SK-N-SH (cell line): ENCODE measurements at regions of chr1 and their contacts with region 1.

Region 1: DNA sequence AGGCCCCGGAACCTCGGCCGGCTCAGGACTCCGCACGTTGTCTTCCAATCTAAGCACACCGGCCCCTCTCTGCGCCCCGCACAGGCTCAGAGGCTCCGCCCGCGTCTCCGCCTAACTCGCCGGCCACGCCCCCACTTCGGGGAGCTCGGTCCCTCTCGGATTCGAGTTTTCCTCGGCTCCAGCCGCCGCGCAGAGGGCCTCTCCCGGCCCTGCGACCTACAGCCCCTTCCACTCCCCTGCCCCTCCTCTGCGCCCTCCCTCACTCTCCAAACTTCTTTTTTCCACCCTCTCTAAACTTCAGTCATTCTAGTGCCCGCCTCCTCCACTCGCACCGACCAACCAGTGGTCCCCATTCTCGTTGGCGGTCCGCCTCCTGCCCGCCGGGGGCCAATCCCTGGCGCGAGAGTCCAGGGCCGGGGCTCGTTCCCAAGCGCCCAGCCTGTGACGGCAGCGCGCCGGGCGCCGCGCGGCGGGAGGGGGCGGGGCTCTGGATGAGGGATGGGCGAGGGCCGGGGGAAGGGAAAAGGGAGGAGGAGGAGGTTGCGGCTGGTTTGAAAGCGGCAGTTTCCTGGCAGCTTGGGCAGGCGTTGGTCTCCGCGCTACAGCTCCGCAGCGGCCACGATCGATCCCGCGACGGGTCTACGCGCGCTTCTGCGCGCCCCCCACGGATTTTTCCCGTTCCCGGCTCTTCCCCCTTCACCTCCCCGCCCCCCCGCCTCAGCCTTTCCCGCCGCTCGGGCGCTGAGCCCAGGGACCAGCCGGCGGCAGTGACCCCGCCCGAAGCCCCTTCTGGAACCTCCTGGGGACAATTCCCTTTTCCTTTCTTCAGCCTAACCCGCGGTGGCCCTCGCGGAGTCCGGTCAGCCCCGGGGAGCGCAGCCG is at the start of gene MAGI3:
- DNase-seq: peak; percentile 93
- H3K4me3 ChIP-seq: peak within 1 kb of the TSS; percentile 87 to 98
- H3K27ac ChIP-seq: peak within 1 kb of the TSS; percentile 57 to 100
- H3K4me1 ChIP-seq: peaks cover 0 to 7% of the 10 kb centered on the region in 2 experiments; a peak in 2 of 4 replicates
- H3K27me3 ChIP-seq: no peaks in the 10 kb centered on the region
- CTCF ChIP-seq: no peak
- EP300 ChIP-seq: 0 out of 4 replicates have a peak, but pooled peaks of 1 of the 2 experiments have one; percentile 8
- RAD21 ChIP-seq: peak; percentile 30; the same call in 1 of the 2 replicates
- polyA plus RNA-seq, gene MAGI3: 2.9 and 3.8 TPM in 2 replicates

Region 2: GRCh38 chr1:113140588-113141446 is 249.4 kb before region 1 on chr1:
- CTCF ChIA-PET with region 1: interaction called, 28 read pairs
- POLR2A ChIA-PET with region 1: interaction called, 61 read pairs
- DNase-seq: peak; percentile 66
- H3K4me3 ChIP-seq: no peak overlapping the region; a peak in 1 of 4 replicates
- H3K27ac ChIP-seq: peak overlapping the region in 1 of 2 experiments; percentile 85; a peak in 2 of 4 replicates
- H3K4me1 ChIP-seq: peaks cover 21 to 36% of the 10 kb centered on the region in 2 experiments; a peak in 3 of 4 replicates
- H3K27me3 ChIP-seq: no peaks in the 10 kb centered on the region
- CTCF ChIP-seq: peak; percentile 93
- EP300 ChIP-seq: peak in 1 of 2 experiments; percentile 3; a peak in 1 of 4 replicates
- RAD21 ChIP-seq: peak; percentile 98

Region 3: DNA sequence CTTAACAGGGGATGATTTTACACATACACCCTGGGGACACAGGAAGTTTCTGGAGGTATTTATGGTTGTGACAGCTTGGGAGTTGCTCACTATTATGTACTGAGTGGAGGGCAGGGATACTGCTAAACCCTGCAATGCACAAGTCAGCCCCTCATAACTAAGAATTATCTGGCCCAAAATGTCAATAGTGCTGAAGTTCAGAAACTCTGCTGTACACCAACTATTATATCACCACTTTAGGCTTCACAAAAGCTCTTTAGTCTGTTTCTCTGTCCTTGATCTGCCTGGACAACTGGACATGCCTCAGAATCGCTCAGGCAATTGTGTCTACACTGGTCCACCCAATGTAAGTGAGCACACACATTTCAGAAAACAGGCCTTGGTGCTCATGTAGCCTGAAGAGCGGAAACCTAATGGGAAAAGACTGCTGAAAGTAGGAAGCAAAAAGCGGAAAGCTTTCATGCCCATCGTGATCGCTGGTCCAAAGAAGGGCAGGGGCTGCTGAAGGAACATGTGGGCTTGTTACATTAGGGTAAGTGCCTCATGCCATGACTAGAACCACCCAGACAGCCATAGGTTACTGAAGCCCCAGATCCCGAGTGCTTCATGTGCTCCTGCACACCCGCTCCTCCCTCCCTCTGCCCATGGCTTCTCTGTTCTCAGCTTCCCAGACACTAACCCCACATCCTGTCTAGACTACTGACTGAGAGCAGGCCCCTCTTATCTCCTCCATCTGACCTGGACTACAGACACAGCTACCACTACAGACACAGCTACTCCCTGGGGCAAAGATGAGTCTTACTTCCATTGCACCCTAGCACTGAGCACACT is 243.7 kb before region 1 on chr1:
- CTCF ChIA-PET with region 1: interaction called, 28 read pairs
- POLR2A ChIA-PET with region 1: interaction called, 61 read pairs
- DNase-seq: peak; percentile 78
- H3K4me3 ChIP-seq: no peak overlapping the region
- H3K27ac ChIP-seq: peak overlapping the region; percentile 36 to 100
- H3K4me1 ChIP-seq: peaks cover 20 to 51% of the 10 kb centered on the region in 2 experiments
- H3K27me3 ChIP-seq: no peaks in the 10 kb centered on the region
- CTCF ChIP-seq: no peak
- EP300 ChIP-seq: peak; percentile 58 to 96; a peak in 3 of 4 replicates
- RAD21 ChIP-seq: peak; percentile 47

Region 4: GRCh38 chr1:113219377-113219776 is 170.8 kb before region 1 on chr1:
- CTCF ChIA-PET with region 1: interaction called, 14 read pairs
- POLR2A ChIA-PET with region 1: interaction called, 18 read pairs
- DNase-seq: peak; percentile 39
- H3K4me3 ChIP-seq: no peak overlapping the region
- H3K27ac ChIP-seq: peak overlapping the region in 1 of 2 experiments; percentile 94; a peak in 2 of 4 replicates
- H3K4me1 ChIP-seq: peaks cover 0 to 42% of the 10 kb centered on the region in 2 experiments; a peak in 2 of 4 replicates
- H3K27me3 ChIP-seq: no peaks in the 10 kb centered on the region
- CTCF ChIP-seq: peak; percentile 39
- EP300 ChIP-seq: no peak; a peak in 2 of 4 replicates
- RAD21 ChIP-seq: peak; percentile 58

Region 5: GRCh38 chr1:113281550-113281949 is 108.6 kb before region 1 on chr1:
- CTCF ChIA-PET with region 1: interaction called, 4 read pairs
- POLR2A ChIA-PET with region 1: interaction called, 13 read pairs
- DNase-seq: no peak
- H3K4me3 ChIP-seq: no peak overlapping the region
- H3K27ac ChIP-seq: peak overlapping the region in 1 of 2 experiments; percentile 98; a peak in 2 of 4 replicates
- H3K4me1 ChIP-seq: peaks cover 0 to 29% of the 10 kb centered on the region in 2 experiments; a peak in 2 of 4 replicates
- H3K27me3 ChIP-seq: no peaks in the 10 kb centered on the region
- CTCF ChIP-seq: no peak
- EP300 ChIP-seq: no peak
- RAD21 ChIP-seq: no peak

Region 6: DNA sequence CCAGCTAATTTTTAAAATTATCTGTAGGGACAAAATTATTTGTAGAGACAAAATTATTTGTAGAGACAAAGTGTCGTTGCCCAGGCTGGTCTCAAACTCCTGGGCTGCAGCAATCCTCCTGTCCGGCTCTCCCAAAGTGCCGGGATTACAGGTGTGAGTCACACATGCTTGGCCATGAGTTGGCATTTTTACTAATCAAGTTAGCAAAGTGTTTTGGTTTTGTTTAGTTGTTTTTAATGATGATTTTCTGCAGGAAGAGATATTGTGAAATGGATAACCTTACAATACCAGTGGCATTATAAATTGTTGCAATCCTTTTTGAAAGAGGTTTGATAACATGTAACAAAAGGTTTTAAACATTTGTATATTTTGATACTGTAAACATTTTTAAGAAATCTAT is 65.2 kb before region 1 on chr1:
- CTCF ChIA-PET with region 1: no interaction called
- POLR2A ChIA-PET with region 1: no interaction called
- DNase-seq: no peak
- H3K4me3 ChIP-seq: no peak overlapping the region
- H3K27ac ChIP-seq: no peak overlapping the region
- H3K4me1 ChIP-seq: no peaks in the 10 kb centered on the region
- H3K27me3 ChIP-seq: no peaks in the 10 kb centered on the region
- CTCF ChIP-seq: no peak
- EP300 ChIP-seq: no peak
- RAD21 ChIP-seq: no peak

Region 7: DNA sequence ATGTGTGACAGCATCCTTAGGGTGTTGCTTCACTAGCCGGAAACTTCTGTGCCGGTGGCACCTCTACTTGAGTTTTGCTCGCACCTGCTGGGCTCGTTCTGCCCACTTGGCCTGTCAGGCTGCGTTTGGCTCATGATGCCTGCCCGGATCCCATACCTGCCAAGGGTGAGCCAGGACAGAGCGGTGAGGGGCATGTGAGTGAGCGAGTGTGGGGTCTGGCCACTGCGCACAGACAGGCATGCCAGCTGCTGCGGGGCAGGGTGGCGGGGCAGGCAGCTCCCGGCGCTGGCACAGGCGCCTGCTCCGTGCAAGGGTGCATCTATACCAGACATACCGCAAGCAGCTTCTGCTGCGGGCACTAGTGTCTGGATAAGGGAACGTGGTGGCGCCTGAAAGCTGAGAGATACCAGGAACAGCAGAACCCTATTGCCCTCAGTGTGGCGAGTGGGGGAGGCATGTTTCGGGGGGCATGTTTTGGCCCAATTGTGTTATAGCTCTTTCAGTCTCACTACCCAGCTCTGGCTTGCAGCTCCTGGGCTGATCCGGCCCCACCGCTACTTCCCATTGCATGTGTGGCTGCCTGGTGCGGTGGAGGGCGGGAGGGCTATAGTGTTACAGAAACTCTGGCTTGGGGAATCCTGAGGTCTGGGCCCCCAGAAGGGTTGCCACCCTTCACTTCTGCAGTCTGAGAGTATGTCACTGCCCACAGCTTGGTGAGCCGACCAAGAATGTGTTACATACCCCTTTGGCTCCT is 32.3 kb after region 1 on chr1:
- CTCF ChIA-PET with region 1: no interaction called
- POLR2A ChIA-PET with region 1: no interaction called
- DNase-seq: no peak
- H3K4me3 ChIP-seq: no peak overlapping the region; a peak in 1 of 4 replicates
- H3K27ac ChIP-seq: no peak overlapping the region
- H3K4me1 ChIP-seq: peaks cover 0 to 3% of the 10 kb centered on the region in 2 experiments; a peak in 3 of 4 replicates
- H3K27me3 ChIP-seq: no peaks in the 10 kb centered on the region
- CTCF ChIP-seq: no peak
- EP300 ChIP-seq: no peak
- RAD21 ChIP-seq: no peak

Region 8: DNA sequence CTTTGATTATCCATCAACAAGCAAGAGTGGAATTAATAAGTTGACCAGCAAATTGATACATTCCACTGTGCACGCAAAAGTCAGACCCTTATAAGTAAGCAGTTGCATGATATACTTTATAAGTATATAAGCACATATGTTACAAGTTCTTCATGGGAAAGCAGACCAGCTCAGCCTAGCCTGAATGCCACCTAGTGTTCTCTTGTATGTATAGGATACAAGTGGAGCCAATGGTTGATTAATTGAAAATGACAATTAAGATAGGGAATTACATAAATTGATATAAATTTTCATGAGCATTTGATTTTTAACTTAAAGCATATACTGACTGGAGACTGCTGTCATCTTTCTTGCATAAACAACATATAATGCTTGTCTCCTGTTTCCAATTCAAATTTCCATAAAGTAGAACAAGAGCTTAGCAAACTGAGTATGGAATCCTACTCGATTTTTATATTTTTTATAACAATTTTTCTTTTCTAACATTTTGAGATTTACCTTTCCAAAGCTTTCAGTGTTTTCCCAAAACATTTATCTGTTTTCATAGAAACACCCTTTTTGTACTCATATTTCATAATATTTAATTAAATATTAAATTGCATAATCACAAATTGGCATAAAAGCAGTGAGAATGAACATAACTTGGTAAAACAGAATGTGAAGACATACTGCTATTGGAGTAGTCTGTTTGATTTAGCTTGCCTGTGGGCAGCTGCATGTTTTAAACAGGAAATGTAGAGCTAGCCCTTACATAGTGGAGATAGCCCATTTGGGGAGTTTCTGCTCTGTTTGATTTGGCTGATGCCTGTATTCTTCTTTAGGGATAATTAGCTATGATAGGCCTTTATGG is 63.0 kb after region 1 on chr1:
- CTCF ChIA-PET with region 1: interaction called, 10 read pairs
- POLR2A ChIA-PET with region 1: no interaction called
- DNase-seq: peak; percentile 26
- H3K4me3 ChIP-seq: no peak overlapping the region
- H3K27ac ChIP-seq: peak overlapping the region; percentile 30 to 79; a peak in 3 of 4 replicates
- H3K4me1 ChIP-seq: peaks cover 2 to 4% of the 10 kb centered on the region in 2 experiments; a peak in 2 of 4 replicates
- H3K27me3 ChIP-seq: no peaks in the 10 kb centered on the region
- CTCF ChIP-seq: peak; percentile 65
- EP300 ChIP-seq: no peak
- RAD21 ChIP-seq: peak; percentile 71